CD4-positive, alpha-beta T cell (primary cell): ENCODE measurements at regions of chr1 and their contacts with region 1.

Region 1: GRCh38 chr1:39326832-39327231 is 122.3 kb downstream of the MACF1 start:
- DNase-seq: peak in 3 of 14 experiments; percentile 13 to 18 (median 14)
- ATAC-seq: no peak
- H3K4me3 ChIP-seq: no peak overlapping the region
- H3K4me3 Mint-ChIP-seq: no peak overlapping the region
- H3K27ac ChIP-seq: no peak overlapping the region
- H3K27ac Mint-ChIP-seq: peak overlapping the region; percentile 36
- H3K4me1 ChIP-seq: no peaks in the 10 kb centered on the region
- H3K4me1 Mint-ChIP-seq: peaks cover 18% of the 10 kb centered on the region
- H3K27me3 ChIP-seq: no peaks in the 10 kb centered on the region
- H3K27me3 Mint-ChIP-seq: no peaks in the 10 kb centered on the region
- CTCF ChIP-seq: no peak

Region 2: GRCh38 chr1:39398278-39399021 is 71.6 kb after region 1 on chr1:
- CTCF ChIA-PET with region 1: no interaction called
- POLR2A ChIA-PET with region 1: no interaction called
- intact Hi-C with region 1: no loop called
- DNase-seq: peak in 6 of 14 experiments; percentile 12 to 60 (median 44)
- ATAC-seq: peak; percentile 54
- H3K4me3 ChIP-seq: no peak overlapping the region
- H3K4me3 Mint-ChIP-seq: peak overlapping the region; percentile 61
- H3K27ac ChIP-seq: no peak overlapping the region
- H3K27ac Mint-ChIP-seq: peak overlapping the region; percentile 74
- H3K4me1 ChIP-seq: peaks cover 38% of the 10 kb centered on the region
- H3K4me1 Mint-ChIP-seq: peaks cover 63% of the 10 kb centered on the region
- H3K27me3 ChIP-seq: no peaks in the 10 kb centered on the region
- H3K27me3 Mint-ChIP-seq: no peaks in the 10 kb centered on the region
- CTCF ChIP-seq: no peak

Region 3: GRCh38 chr1:39434797-39435395 is 108.1 kb after region 1 on chr1:
- CTCF ChIA-PET with region 1: no interaction called
- POLR2A ChIA-PET with region 1: no interaction called
- intact Hi-C with region 1: loop called in 1 of 2 experiments (anchors 10 kb)
- DNase-seq: no peak
- ATAC-seq: no peak
- H3K4me3 ChIP-seq: no peak overlapping the region
- H3K4me3 Mint-ChIP-seq: no peak overlapping the region
- H3K27ac ChIP-seq: no peak overlapping the region
- H3K27ac Mint-ChIP-seq: no peak overlapping the region
- H3K4me1 ChIP-seq: no peaks in the 10 kb centered on the region
- H3K4me1 Mint-ChIP-seq: no peaks in the 10 kb centered on the region
- H3K27me3 ChIP-seq: no peaks in the 10 kb centered on the region
- H3K27me3 Mint-ChIP-seq: no peaks in the 10 kb centered on the region
- CTCF ChIP-seq: no peak